ENCODE measurements at regions of chr12 and their contacts with region 1.

Region 1: DNA sequence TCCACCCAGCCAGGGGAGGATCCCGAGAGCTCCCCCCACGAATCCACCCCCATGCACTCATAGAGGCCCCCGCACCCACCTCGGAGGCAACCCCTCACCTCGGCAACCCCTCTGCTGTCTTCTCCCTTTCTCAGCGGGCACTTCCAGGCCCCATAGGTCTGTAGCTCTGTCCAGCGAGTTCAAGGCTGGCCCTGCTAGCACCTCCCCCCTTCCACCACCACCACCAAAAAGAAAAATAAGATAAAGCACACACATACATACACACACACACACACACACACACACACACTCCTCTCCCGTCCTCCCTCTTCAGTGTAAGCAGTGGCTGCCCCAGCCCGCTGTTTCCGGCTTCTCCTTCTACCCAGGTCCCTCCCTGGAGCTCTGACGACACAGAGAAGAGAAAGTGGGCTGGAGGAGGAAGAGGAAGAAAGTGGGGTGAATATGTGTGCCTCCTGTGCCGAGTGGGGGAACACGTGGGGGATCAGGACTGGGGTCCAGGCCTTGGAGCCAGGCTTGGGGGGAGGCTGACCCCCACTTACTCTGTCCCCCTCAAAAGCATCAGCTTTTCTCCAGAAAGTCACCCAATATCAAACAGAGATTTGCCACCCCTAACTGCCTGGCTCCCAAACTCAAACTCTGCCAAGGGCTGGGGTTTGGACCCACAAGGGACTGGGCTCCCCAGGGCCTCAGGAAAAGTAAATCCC is at the start of gene STAT6:
- DNase-seq: peak; percentile 96
- H3K4me3 Mint-ChIP-seq: peak within 1 kb of the TSS; percentile 92
- H3K27ac Mint-ChIP-seq: peak within 1 kb of the TSS; percentile 92
- H3K4me1 Mint-ChIP-seq: peaks cover 47% of the 10 kb centered on the region
- H3K27me3 Mint-ChIP-seq: peaks cover 1% of the 10 kb centered on the region
- total RNA-seq, gene STAT6: 304 and 319 TPM in 2 replicates

Region 2: GRCh38 chr12:56751712-56752598 is 359.2 kb before region 1 on chr12 and contains the start of gene PRIM1:
- intact Hi-C with region 1: loop called (anchors 5 kb)
- DNase-seq: peak; percentile 97
- H3K4me3 Mint-ChIP-seq: peak within 1 kb of the TSS; percentile 98
- H3K27ac Mint-ChIP-seq: peak within 1 kb of the TSS; percentile 99
- H3K4me1 Mint-ChIP-seq: peaks cover 39% of the 10 kb centered on the region
- H3K27me3 Mint-ChIP-seq: no peaks in the 10 kb centered on the region
- total RNA-seq, gene PRIM1: 69.2 and 74.0 TPM in 2 replicates

Region 3: DNA sequence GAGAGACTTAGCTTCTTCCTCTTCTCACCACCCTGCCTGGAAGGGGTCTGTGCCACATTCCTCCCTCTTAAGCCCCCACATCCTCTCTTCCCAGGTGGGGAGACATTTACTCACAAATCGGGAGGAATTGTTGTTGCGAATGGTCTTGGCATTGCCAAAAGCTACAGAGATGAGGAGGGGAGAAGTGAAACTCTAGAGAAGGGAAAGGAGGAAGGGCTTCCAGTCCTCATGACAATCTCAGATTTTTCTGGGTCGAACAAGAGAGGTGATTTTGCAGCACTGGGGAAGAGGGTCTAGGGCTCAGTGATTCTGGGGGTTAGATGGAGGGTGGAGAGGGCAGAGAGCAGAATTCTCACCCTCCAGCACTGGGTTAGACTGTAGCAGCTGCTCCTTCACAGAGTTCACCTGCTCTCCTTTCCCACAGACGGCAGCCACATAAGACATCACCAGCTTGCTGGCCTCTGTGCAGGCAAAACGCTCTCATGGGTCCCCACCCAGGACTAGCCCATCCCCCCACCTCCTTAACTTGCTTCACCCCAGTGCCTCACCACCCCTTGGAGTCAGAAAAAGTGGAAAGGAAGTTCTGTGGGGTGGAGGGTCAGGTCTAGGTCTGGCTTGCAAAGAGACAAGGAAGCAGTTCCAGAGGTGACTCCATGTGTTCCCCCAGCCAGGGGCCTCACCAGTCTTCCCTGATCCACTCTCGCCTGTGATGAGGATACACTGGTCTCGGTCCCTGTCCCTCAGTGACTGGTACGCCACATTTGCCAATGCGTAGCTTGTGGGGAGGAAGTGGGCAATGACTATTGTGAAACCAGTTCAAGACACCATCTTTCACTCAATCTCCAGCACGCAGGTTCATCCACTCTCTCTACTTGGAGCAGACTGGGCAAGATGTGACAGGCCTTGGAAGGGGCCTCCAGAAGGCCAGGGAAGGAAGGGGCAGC is 64.0 kb before region 1 on chr12:
- intact Hi-C with region 1: no loop called
- DNase-seq: peak; percentile 85
- H3K4me3 Mint-ChIP-seq: peak overlapping the region; percentile 65
- H3K27ac Mint-ChIP-seq: peak overlapping the region; percentile 87
- H3K4me1 Mint-ChIP-seq: peaks cover 34% of the 10 kb centered on the region
- H3K27me3 Mint-ChIP-seq: no peaks in the 10 kb centered on the region

Region 4: DNA sequence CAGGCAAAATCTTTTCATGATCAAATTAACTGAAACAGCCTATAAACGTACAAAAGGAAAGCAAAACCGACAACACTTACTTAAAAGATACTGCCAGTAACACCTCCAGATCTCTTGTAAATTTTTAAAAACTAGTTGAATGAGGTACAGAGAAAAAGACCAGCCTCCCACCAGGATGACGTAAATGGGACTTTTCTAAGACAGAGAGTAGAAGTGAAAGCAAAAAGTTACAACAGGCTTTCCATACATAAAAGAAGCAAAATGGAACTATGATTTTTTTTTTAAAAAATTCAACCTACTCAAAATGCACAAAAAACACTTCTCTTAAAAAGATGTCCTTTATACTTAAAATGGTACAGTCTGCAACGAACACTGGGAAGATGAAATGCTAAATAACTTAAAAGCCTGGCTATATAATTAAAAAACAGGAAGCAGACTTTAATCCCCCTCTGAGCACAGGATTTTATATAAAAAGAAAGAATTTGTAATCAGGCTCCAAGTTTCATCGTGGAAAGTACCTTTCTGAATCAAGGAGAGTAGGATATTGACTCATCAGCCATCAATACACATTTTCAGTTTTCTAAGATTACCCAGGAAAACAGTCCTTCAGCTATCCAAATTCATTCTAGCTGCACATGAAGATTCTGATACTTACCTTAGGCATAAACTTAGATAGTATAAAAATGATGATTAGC is 47.0 kb before region 1 on chr12:
- intact Hi-C with region 1: loop called (anchors 1 kb)
- DNase-seq: peak; percentile 89
- H3K4me3 Mint-ChIP-seq: peak overlapping the region; percentile 85
- H3K27ac Mint-ChIP-seq: peak overlapping the region; percentile 96
- H3K4me1 Mint-ChIP-seq: peaks cover 35% of the 10 kb centered on the region
- H3K27me3 Mint-ChIP-seq: no peaks in the 10 kb centered on the region

Region 5: GRCh38 chr12:57088459-57089248 is 22.5 kb before region 1 on chr12 and contains the start of gene NAB2:
- intact Hi-C with region 1: loop called (anchors 1 kb)
- DNase-seq: peak; percentile 98
- H3K4me3 Mint-ChIP-seq: peak within 1 kb of the TSS; percentile 96
- H3K27ac Mint-ChIP-seq: peak within 1 kb of the TSS; percentile 97
- H3K4me1 Mint-ChIP-seq: peaks cover 68% of the 10 kb centered on the region
- H3K27me3 Mint-ChIP-seq: no peaks in the 10 kb centered on the region
- total RNA-seq, gene NAB2: 70.5 and 76.7 TPM in 2 replicates

Region 6: GRCh38 chr12:57135527-57136326 is 24.5 kb after region 1 on chr12:
- intact Hi-C with region 1: no loop called
- DNase-seq: no peak
- H3K4me3 Mint-ChIP-seq: no peak overlapping the region
- H3K27ac Mint-ChIP-seq: no peak overlapping the region
- H3K4me1 Mint-ChIP-seq: no peaks in the 10 kb centered on the region
- H3K27me3 Mint-ChIP-seq: peaks cover 18% of the 10 kb centered on the region